ENCODE measurements at regions of chr19 and their contacts with region 1.

Region 1: DNA sequence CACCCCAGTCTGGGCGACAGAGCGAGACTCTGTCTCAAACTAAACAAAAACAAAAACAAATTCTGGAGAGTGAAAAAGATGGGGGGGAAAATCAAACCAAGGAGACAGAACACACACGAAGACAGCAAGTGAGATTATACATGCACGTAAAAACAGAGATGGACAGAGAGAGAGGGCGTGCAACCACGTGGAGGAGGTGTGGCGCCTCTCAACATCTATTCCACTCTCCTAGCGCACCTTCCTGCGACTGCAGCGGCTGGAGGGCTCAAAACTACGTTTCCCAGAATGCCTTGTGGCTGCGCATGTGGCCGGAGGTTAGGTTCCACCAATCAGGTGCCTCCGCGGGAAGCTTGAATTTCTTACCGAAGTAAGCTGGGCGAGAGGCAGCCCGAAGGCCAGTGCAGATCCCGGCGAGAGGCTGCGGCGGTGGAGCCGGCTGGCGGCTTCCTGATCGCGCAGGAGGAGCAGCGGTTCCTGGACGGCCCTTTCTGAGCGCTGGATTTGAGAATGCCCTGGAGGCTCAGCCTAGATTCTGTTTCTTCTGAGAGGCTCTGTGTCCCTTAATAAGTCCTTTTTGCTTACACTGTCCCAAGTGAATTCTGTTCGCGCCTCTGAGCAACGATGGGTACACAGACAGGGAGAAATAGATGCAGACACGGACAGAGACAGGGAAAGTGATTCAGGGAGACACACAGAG is 13.1 kb upstream of the NANOS2 start:
- DNase-seq: peak; percentile 86
- H3K4me3 Mint-ChIP-seq: peak overlapping the region; percentile 78
- H3K27ac Mint-ChIP-seq: no peak overlapping the region
- H3K4me1 Mint-ChIP-seq: peaks cover 19% of the 10 kb centered on the region
- H3K27me3 Mint-ChIP-seq: peaks cover 15% of the 10 kb centered on the region

Region 2: GRCh38 chr19:46016426-46017094 is 88.8 kb after region 1 on chr19:
- intact Hi-C with region 1: loop called (anchors 5 kb)
- DNase-seq: peak; percentile 74
- H3K4me3 Mint-ChIP-seq: peak overlapping the region; percentile 89
- H3K27ac Mint-ChIP-seq: peak overlapping the region; percentile 78
- H3K4me1 Mint-ChIP-seq: peaks cover 15% of the 10 kb centered on the region
- H3K27me3 Mint-ChIP-seq: peaks cover 12% of the 10 kb centered on the region